GM13977 (cell line): ENCODE measurements at regions of chr17 and their contacts with region 1.

Region 1: DNA sequence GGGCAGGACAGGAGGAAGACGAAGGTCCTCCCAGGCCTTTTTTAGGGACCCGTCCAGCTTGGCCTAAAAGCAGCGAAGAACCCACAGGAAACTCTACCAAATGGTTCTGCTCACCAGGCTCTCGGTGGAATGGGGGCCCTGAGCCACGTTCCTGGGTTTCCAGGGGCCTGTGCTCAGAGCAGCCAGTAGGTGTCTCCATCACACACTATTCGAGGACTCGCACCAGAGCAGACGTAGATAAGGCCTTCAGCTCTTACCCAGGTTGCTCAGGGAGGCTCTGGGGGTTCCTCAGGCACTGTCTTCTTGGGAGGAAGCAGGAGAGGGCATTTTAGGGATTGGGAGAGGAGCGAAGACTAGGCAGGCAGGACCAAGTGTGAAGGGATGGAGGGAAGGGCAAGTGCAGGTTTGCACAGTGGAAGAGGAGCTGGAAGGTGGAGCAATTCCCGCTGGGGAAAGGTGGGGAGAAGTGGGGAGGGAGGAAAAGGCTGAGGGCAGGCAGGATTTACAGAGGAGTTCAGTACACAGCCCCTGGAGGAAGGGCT is 157.1 kb downstream of the RGS9 start:
- DNase-seq: peak; percentile 74
- CTCF ChIP-seq: peak; percentile 79

Region 2: GRCh38 chr17:65122836-65123756 is 171.2 kb before region 1 on chr17:
- in situ Hi-C with region 1: no loop called
- DNase-seq: peak; percentile 84
- CTCF ChIP-seq: no peak

Region 3: GRCh38 chr17:65988081-65988850 is 694.0 kb after region 1 on chr17:
- in situ Hi-C with region 1: loop called (anchors 10 kb)
- DNase-seq: peak; percentile 4
- CTCF ChIP-seq: peak; percentile 49

Region 4: DNA sequence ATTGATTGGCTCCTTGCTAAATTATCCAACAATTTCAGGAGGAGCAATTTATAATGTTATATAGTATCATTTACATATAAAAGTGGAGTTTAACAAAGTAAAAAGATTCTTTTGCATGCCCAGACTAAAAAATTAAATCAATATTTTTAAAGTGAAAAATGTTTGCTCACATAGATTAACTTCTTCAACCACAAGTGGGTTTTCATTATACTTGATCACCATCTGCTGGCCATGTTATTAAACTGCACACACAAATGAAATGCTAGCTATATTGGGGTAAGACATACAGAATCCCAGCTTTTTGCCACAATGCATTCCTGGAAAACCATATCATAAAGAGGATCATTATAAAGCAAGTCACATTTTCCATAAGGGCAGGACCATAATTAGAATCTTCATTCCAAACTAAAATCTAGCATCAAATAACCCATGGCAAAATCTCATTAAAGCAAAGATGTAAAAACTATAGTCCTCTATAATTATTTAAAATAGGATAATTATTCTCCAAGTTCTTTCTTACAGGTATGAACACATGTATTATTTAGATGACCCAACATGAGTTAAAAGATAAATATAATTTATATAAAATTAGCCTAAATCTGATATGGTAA is 871.4 kb after region 1 on chr17:
- in situ Hi-C with region 1: loop called (anchors 25 kb)
- DNase-seq: peak; percentile 54
- CTCF ChIP-seq: peak; percentile 63